HCT116 (cell line): ENCODE measurements at regions of chr10 and their contacts with region 1.

Region 1: GRCh38 chr10:110746254-110746826 is 102.2 kb downstream of the RBM20 start:
- DNase-seq: peak; percentile 63
- ATAC-seq: peak; percentile 93
- H3K4me3 ChIP-seq: no peak overlapping the region
- H3K27ac ChIP-seq: no peak overlapping the region
- H3K4me1 ChIP-seq: no peaks in the 10 kb centered on the region
- H3K27me3 ChIP-seq: no peaks in the 10 kb centered on the region; the same call in 1 of the 2 replicates
- CTCF ChIP-seq: peak; percentile 86 to 99 (median 93)
- POLR2A ChIP-seq: no peak
- RAD21 ChIP-seq: peak; percentile 99

Region 2: GRCh38 chr10:110871298-110872084 is 125.2 kb after region 1 on chr10 and contains the start of gene PDCD4:
- CTCF ChIA-PET with region 1: no interaction called
- POLR2A ChIA-PET with region 1: no interaction called
- RAD21 ChIA-PET with region 1: no interaction called
- intact Hi-C with region 1: loop called (anchors 1 kb)
- DNase-seq: peak; percentile 95
- ATAC-seq: peak; percentile 93
- H3K4me3 ChIP-seq: peak within 1 kb of the TSS; percentile 65 to 67
- H3K27ac ChIP-seq: peak within 1 kb of the TSS; percentile 60
- H3K4me1 ChIP-seq: peaks cover 14 to 20% of the 10 kb centered on the region in 2 experiments; a peak in 3 of 4 replicates
- H3K27me3 ChIP-seq: no peaks in the 10 kb centered on the region
- CTCF ChIP-seq: no peak
- POLR2A ChIP-seq: peak; percentile 52
- RAD21 ChIP-seq: no peak
- total RNA-seq, gene PDCD4: 63.0 TPM

Region 3: GRCh38 chr10:111023060-111023459 is 276.7 kb after region 1 on chr10:
- CTCF ChIA-PET with region 1: interaction called, 4 read pairs
- POLR2A ChIA-PET with region 1: no interaction called
- RAD21 ChIA-PET with region 1: no interaction called
- intact Hi-C with region 1: loop called (anchors 10 kb)
- DNase-seq: no peak
- ATAC-seq: no peak
- H3K4me3 ChIP-seq: no peak overlapping the region
- H3K27ac ChIP-seq: no peak overlapping the region
- H3K4me1 ChIP-seq: no peaks in the 10 kb centered on the region
- H3K27me3 ChIP-seq: no peaks in the 10 kb centered on the region
- CTCF ChIP-seq: no peak
- POLR2A ChIP-seq: no peak
- RAD21 ChIP-seq: no peak

Region 4: DNA sequence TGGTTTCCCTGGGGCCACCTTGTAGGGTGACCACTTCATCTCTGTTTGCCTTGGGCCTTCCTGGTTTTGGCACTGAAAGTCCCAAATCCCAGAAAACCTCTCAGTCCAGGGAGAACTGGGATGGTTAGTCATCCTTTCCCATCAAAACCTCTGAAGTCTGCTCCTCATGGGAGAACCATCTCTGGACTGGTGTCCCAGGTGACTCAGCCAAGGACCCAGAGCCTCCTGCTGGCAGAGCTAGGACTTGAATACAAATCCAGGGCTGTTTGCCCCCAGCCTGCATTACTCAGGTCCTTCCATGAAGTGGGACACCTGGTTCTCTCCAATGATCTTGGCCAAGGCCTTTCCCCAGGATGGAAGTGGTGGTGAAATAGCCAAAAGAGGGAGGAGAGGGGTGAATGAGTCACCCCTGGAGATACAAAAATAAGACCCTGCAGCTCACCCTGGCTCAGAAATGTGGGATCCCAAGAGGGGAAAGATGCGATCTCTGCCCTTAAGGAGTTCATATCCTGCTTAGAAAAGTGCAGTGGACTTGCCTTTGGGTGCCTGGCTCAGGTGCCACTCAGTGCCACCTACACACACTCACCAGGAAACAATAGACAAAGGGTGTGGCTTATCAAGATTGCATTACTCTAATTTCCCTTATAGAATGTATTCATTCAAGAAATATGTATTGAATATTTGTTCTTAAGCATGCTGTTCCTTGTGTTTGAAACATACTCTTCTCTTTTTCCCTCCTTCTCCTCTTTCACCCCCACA is 352.5 kb after region 1 on chr10:
- CTCF ChIA-PET with region 1: no interaction called
- POLR2A ChIA-PET with region 1: no interaction called
- RAD21 ChIA-PET with region 1: no interaction called
- intact Hi-C with region 1: loop called (anchors 1 kb)
- DNase-seq: peak; percentile 19
- ATAC-seq: peak; percentile 78
- H3K4me3 ChIP-seq: no peak overlapping the region
- H3K27ac ChIP-seq: no peak overlapping the region
- H3K4me1 ChIP-seq: peaks cover 0 to 7% of the 10 kb centered on the region in 2 experiments; a peak in 2 of 4 replicates
- H3K27me3 ChIP-seq: peaks cover 25% of the 10 kb centered on the region
- CTCF ChIP-seq: peak; percentile 17 to 53 (median 46); a peak in 4 of 6 replicates
- POLR2A ChIP-seq: no peak
- RAD21 ChIP-seq: peak; percentile 50

Region 5: DNA sequence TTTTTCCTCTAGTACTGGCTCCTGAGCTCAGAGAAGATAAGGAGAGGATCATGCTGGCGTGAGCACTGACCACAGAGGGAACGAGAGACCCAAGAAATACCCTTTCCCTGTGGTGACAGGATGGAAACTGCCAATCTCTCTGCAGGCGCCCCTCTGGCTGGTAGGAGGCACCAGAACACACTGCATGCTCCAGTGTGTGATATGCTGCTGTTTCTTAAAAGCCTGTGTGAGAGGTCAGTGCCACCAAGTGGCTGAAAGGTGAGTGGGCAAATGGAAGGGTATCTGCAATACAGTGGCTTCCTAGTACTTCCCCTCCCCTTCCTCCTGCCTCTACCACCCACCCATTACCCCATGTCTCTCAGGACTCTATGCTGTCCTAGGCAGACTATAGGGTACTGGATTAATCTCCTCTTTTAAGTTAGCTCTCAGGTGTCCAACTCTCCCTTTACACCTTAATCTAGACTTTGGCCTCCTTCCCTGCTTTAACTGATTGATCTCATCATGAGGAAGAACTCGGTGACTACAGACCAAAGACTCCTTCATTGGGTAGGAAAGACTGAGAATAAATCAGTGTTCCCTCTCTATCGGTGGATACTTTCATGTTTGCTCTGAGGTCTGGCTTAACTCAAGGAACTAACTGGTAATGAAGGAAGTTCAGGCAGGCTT is 614.1 kb after region 1 on chr10:
- CTCF ChIA-PET with region 1: interaction called, 3 read pairs
- POLR2A ChIA-PET with region 1: no interaction called
- RAD21 ChIA-PET with region 1: no interaction called
- intact Hi-C with region 1: loop called (anchors 1 kb)
- DNase-seq: peak; percentile 64
- ATAC-seq: peak; percentile 99
- H3K4me3 ChIP-seq: no peak overlapping the region
- H3K27ac ChIP-seq: no peak overlapping the region
- H3K4me1 ChIP-seq: no peaks in the 10 kb centered on the region
- H3K27me3 ChIP-seq: peaks cover 49% of the 10 kb centered on the region
- CTCF ChIP-seq: peak; percentile 73 to 96 (median 78)
- POLR2A ChIP-seq: no peak
- RAD21 ChIP-seq: peak; percentile 93

Region 6: GRCh38 chr10:112314822-112315474 is 1568.6 kb after region 1 on chr10:
- CTCF ChIA-PET with region 1: no interaction called
- POLR2A ChIA-PET with region 1: no interaction called
- RAD21 ChIA-PET with region 1: no interaction called
- intact Hi-C with region 1: loop called (anchors 10 kb)
- DNase-seq: peak; percentile 72
- ATAC-seq: peak; percentile 95
- H3K4me3 ChIP-seq: no peak overlapping the region
- H3K27ac ChIP-seq: no peak overlapping the region
- H3K4me1 ChIP-seq: peaks cover 0 to 18% of the 10 kb centered on the region in 2 experiments; a peak in 1 of 4 replicates
- H3K27me3 ChIP-seq: no peaks in the 10 kb centered on the region
- CTCF ChIP-seq: peak; percentile 87 to 99 (median 98)
- POLR2A ChIP-seq: no peak
- RAD21 ChIP-seq: peak; percentile 96